Brain microvascular endothelial cell (primary cell): ENCODE measurements at regions of chr3 and their contacts with region 1.

Region 1: GRCh38 chr3:192802957-192803899 is 75.9 kb upstream of the FGF12 start:
- DNase-seq: peak; percentile 20
- H3K4me3 ChIP-seq: no peak overlapping the region
- H3K27ac ChIP-seq: no peak overlapping the region
- H3K27me3 ChIP-seq: no peaks in the 10 kb centered on the region
- CTCF ChIP-seq: peak; percentile 61

Region 2: GRCh38 chr3:193040836-193041672 is 237.8 kb after region 1 on chr3:
- in situ Hi-C with region 1: loop called (anchors 25 kb)
- DNase-seq: peak; percentile 40
- H3K4me3 ChIP-seq: no peak overlapping the region
- H3K27ac ChIP-seq: no peak overlapping the region
- H3K27me3 ChIP-seq: no peaks in the 10 kb centered on the region
- CTCF ChIP-seq: peak; percentile 42

Region 3: GRCh38 chr3:193592944-193593667 is 789.9 kb after region 1 on chr3 and contains the start of gene OPA1:
- in situ Hi-C with region 1: loop called (anchors 25 kb)
- DNase-seq: peak; percentile 97
- H3K4me3 ChIP-seq: peak within 1 kb of the TSS; percentile 92
- H3K27ac ChIP-seq: peak within 1 kb of the TSS; percentile 87
- H3K27me3 ChIP-seq: no peaks in the 10 kb centered on the region
- CTCF ChIP-seq: peak; percentile 38